SK-N-SH (cell line): ENCODE measurements at regions of chr2 and their contacts with region 1.

Region 1: DNA sequence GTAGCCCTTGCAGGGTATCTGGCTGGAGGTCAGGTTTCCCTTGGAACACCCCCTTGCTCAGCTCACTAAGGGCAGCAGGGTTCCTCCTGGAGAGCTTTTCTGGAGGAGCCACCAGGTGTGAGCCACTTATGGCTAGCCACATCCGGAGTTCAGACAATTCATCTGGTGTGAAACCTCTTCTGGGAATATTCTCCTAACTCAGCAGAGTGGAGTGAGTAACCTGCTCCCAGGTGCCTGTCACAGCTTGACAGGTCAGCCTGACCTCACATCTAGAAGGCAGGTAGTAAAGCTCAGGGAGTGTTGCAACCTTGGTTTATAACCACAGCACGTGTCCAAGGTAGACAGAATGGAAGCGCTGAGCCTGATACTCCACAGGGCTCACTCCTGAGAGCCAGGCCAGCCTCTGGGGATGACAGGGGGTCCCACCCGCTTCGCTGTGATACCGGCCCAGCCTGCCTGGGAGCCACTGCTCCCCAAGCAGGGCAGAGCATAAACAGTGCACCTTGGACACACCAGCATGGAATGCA is 62.6 kb upstream of the TGFA start:
- DNase-seq: no peak
- H3K4me3 ChIP-seq: no peak overlapping the region
- H3K27ac ChIP-seq: no peak overlapping the region
- H3K4me1 ChIP-seq: no peaks in the 10 kb centered on the region
- H3K27me3 ChIP-seq: peaks cover 22% of the 10 kb centered on the region; the same call in 1 of the 2 replicates
- CTCF ChIP-seq: no peak
- EP300 ChIP-seq: no peak
- RAD21 ChIP-seq: no peak

Region 2: DNA sequence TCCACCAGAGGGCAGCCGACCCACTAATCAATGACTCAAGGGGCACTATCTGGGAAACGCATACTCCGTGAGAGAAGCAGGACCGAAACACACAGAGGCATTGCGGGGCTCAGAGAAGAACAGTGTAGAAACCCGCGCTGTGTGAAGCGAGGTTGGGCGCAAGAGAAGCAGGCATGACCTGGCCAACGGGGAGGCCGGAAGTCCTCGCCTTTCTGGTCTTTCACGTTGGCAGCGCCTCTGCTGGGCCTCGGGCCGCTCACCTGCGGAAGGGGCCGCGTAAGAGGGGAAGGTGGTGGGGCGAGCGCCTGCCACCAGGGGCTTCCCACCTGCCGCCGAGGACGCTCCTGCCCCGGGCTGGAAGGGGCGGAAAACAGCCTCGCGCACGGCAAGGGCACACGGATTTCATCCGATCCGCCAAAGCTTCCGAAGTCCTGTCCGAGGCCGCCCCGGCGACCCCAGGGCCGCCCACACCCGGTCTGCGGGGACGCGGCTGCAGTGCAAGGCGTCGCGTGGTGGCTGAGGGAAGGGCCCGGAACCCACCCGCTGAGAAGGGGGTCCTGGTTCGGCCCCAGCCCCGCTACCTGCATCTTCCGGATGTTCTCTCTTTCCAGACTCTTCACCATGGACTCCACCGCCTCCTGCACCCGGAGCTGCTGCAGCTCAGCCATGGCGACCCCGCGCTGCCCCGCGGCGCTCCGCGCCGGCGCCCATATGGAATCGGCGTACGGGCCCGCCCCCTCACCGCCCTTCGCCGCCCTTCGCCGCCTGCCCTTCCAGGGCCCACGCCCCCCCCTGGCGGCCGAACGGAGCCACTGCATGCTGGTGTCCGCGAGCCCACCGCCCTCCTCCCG is 314.7 kb before region 1 on chr2 and contains the start of gene FAM136A:
- CTCF ChIA-PET with region 1: interaction called, 134 read pairs
- POLR2A ChIA-PET with region 1: interaction called, 4 read pairs
- DNase-seq: peak; percentile 96
- H3K4me3 ChIP-seq: peak within 1 kb of the TSS; percentile 82 to 97
- H3K27ac ChIP-seq: peak within 1 kb of the TSS; percentile 53 to 85
- H3K4me1 ChIP-seq: peaks cover 6 to 9% of the 10 kb centered on the region in 2 experiments; a peak in 1 of 4 replicates
- H3K27me3 ChIP-seq: no peaks in the 10 kb centered on the region
- CTCF ChIP-seq: peak; percentile 80
- EP300 ChIP-seq: 0 out of 4 replicates have a peak, but pooled peaks of 1 of the 2 experiments have one; percentile 30
- RAD21 ChIP-seq: peak; percentile 46; the same call in 1 of the 2 replicates
- polyA plus RNA-seq, gene FAM136A: 43.3 and 50.6 TPM in 2 replicates

Region 3: GRCh38 chr2:70328921-70329561 is 287.2 kb before region 1 on chr2:
- CTCF ChIA-PET with region 1: interaction called, 17 read pairs
- POLR2A ChIA-PET with region 1: no interaction called
- DNase-seq: no peak
- H3K4me3 ChIP-seq: no peak overlapping the region
- H3K27ac ChIP-seq: no peak overlapping the region
- H3K4me1 ChIP-seq: no peaks in the 10 kb centered on the region
- H3K27me3 ChIP-seq: no peaks in the 10 kb centered on the region; the same call in 1 of the 2 replicates
- CTCF ChIP-seq: no peak
- EP300 ChIP-seq: no peak
- RAD21 ChIP-seq: no peak

Region 4: DNA sequence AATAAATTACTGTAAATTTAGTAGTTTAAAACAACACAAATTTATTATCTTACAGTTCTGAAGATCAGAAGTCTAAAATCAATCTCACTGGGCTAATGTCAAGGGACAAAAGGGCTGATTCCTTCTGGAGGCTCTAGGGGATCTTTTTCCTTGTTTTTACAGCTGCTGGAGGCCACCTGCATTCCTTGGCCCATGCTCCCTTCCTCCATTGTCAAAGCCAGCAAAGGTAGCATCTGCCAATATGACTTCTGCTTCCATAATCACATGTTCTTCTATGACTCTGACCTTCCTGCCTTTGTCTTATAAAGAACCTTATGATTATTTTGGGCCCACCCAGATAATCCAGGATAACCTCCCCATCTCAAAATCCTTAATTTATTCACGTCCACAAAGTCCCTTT is 268.4 kb before region 1 on chr2:
- CTCF ChIA-PET with region 1: interaction called, 125 read pairs
- POLR2A ChIA-PET with region 1: no interaction called
- DNase-seq: no peak
- H3K4me3 ChIP-seq: no peak overlapping the region
- H3K27ac ChIP-seq: no peak overlapping the region
- H3K4me1 ChIP-seq: no peaks in the 10 kb centered on the region
- H3K27me3 ChIP-seq: peaks cover 21% of the 10 kb centered on the region; the same call in 1 of the 2 replicates
- CTCF ChIP-seq: no peak
- EP300 ChIP-seq: no peak
- RAD21 ChIP-seq: no peak

Region 5: DNA sequence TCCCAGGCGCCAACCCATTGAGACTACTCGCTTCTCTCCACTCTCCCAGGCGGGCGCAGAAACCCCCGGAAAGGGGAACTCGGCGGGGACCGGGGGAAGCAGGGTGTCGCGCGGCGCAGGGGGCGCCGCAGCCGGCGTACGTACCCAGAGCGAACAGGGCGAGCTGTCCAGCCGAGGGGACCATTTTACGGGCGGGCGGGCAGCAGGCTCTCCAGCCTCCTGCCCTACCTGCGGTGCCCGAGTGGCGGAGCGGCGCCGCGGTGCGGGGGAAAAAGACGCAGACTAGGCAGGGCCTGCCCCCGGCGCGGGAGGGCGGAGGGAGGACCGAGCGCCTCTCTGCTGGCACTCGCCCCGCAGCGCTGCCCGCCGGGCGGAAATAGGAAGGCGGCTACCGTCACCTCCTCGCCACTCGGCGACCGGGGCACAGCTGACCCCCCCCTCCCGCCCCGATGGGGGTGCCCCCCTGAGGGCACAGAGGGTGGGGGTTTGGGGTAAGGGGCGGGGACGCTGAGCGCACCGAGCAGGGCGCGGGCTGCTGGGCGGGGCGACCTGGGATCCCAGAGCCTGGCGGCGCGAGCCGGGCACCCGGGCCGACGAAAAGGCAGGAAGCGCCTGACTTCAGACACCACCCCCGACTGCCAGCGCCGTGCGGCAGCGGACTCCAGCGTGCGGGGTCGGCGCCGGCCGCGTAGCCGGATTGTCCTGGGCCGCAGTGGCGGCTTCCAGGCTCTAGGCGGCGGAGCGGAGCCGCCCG is 62.5 kb before region 1 on chr2 and contains the start of gene TGFA:
- CTCF ChIA-PET with region 1: interaction called, 14 read pairs
- POLR2A ChIA-PET with region 1: no interaction called
- DNase-seq: peak; percentile 88
- H3K4me3 ChIP-seq: peak within 1 kb of the TSS; percentile 50 to 62
- H3K27ac ChIP-seq: no peak within 1 kb of the TSS
- H3K4me1 ChIP-seq: peaks cover 0 to 11% of the 10 kb centered on the region in 2 experiments; a peak in 1 of 4 replicates
- H3K27me3 ChIP-seq: peaks cover 42% of the 10 kb centered on the region
- CTCF ChIP-seq: peak; percentile 67
- EP300 ChIP-seq: no peak
- RAD21 ChIP-seq: peak; percentile 27
- polyA plus RNA-seq, gene TGFA: not detected in 2 replicates

Region 6: DNA sequence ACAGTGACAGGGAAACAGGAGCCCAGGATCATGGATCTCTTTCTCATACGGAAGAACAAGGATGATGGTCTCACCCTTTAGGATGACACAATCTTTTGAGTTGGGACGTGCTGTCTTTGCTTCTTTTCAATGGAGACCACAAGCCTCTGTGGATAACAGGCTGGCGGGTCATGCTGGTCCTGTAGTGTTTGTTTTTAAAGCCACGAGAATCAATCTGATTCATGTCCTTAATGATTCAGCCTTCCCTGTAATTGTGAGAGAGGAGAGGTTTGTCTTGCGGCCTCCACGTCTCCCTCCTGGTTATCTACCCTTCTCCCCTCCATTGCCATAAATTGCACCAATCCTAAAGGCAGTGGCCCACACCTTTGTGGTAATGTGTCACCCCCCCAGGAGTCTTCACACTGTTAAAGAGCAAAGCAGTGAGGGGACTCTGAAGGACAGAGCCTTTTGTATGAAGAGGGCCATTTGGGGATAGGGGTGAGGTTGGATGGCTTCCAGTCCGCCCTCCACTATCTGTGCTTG is 25.1 kb after region 1 on chr2:
- CTCF ChIA-PET with region 1: interaction called, 15 read pairs
- POLR2A ChIA-PET with region 1: no interaction called
- DNase-seq: no peak
- H3K4me3 ChIP-seq: no peak overlapping the region
- H3K27ac ChIP-seq: no peak overlapping the region
- H3K4me1 ChIP-seq: no peaks in the 10 kb centered on the region
- H3K27me3 ChIP-seq: no peaks in the 10 kb centered on the region
- CTCF ChIP-seq: no peak
- EP300 ChIP-seq: no peak
- RAD21 ChIP-seq: no peak

Region 7: DNA sequence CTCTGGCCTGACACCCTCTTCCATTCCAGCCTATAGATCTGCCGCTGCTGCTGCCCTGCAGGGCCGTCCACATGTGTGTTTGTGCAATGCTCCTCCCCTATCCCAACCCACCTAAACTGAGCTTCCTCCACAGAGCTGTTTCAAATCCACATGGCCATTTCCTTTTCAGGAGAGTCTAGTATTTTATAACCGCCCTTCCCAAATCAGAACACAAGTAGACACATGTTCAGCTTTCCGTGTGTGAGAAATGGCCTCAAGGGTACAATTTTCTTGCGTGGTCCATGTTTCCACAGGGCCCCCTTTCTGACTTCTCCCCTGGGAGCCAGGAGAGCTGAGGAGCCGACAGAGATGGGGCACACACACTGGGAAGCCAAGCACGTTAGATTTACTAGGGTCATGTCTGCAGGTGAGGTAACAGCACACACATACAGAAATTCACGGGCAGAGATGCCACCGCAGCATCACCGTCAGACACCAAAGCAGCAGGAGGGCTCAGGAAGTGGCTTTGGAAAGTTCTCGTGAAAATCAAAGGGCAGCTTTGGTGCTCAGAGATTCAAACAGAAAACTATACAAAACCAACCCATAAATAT is 40.3 kb after region 1 on chr2:
- CTCF ChIA-PET with region 1: interaction called, 11 read pairs
- POLR2A ChIA-PET with region 1: no interaction called
- DNase-seq: no peak
- H3K4me3 ChIP-seq: no peak overlapping the region
- H3K27ac ChIP-seq: no peak overlapping the region
- H3K4me1 ChIP-seq: no peaks in the 10 kb centered on the region
- H3K27me3 ChIP-seq: peaks cover 16% of the 10 kb centered on the region; the same call in 1 of the 2 replicates
- CTCF ChIP-seq: no peak
- EP300 ChIP-seq: no peak
- RAD21 ChIP-seq: no peak

Region 8: DNA sequence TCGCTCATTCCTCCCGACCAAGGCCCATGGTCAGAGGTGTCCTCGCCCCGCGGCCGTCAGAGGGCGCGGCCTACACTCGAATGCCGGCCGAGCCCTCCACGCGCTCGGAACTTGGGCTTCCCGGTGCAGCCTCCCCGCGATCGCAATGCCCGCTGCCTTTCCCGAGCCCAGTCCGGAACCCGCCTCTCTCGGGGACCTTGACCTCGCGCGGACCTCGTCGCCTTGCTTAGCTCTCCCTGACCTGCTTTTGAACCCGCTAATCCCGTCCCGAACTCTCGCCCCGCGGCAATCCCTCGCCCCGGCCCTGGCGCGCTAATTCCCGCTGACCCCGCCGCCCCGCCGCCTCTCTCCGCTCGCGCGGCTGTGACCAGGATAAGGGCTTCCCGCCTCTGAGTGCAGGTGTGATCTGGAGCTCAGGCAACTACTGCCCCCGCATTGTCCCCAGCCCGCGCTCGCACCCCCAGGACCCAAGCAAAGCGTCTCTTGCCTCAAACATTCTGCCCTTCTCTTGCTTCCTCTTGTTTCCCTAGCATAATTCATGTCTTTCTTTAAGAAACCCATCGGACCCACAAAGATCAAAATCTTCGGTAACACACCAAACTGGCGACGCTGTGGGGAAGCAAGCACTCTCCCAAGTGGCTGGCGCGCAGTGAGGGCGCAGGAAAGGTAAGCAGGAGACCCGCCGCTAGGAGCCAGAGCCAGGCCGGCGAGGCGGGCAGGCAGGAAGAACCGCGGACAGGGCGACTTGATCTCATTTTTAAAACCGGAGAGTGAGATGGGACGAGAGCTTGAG is 272.9 kb after region 1 on chr2:
- CTCF ChIA-PET with region 1: no interaction called
- POLR2A ChIA-PET with region 1: no interaction called
- DNase-seq: no peak
- H3K4me3 ChIP-seq: no peak overlapping the region
- H3K27ac ChIP-seq: no peak overlapping the region
- H3K4me1 ChIP-seq: no peaks in the 10 kb centered on the region
- H3K27me3 ChIP-seq: no peaks in the 10 kb centered on the region
- CTCF ChIP-seq: no peak
- EP300 ChIP-seq: no peak
- RAD21 ChIP-seq: no peak